ENCODE measurements at regions of chr1 and their contacts with region 1.

Region 1: DNA sequence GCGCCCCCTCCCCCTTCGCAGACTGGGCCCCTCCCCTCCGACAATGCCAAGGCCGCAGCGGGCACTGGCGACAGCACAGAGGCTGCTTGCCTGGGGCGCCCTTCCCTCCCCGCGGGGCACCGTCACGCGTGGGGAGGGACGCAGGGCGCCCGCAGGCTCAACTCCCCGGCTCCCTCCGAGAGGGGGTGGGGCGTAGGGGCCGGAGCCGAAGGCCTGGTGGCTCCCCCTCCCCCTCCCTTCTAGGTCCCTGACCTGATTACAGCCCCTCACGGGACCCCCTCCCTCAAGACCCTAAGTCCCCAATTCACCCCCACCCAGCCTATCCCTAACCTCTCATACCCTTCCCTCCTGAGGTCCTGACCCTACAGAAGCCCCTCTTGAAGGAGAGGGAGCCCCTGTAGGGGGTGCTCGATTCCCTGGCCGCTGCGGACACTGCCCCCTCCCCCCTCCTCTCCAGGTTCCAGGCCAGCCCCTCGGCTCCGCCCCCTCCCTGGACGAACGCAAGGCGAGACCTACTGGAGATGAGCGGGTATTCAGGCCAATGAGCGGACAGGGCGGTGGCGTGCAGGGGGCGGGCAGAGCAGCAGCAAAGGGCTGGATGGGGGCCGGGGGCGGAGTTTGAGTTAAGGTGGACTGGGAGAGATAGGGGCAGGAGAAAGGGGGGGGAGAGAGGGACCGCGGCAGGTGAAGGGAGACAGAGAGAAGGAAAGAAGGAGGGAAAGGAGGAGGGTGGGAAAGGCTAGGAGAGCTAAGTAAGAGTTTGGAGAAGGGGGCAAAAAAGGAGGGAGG is 733 bp upstream of the ZBTB7B start:
- DNase-seq: peak; percentile 100
- H3K4me3 ChIP-seq: peak overlapping the region; percentile 92
- H3K4me3 Mint-ChIP-seq: peak overlapping the region; percentile 96
- H3K27ac Mint-ChIP-seq: peak overlapping the region; percentile 96
- H3K4me1 ChIP-seq: peaks cover 25% of the 10 kb centered on the region
- H3K4me1 Mint-ChIP-seq: peaks cover 30% of the 10 kb centered on the region
- H3K27me3 ChIP-seq: no peaks in the 10 kb centered on the region
- H3K27me3 Mint-ChIP-seq: no peaks in the 10 kb centered on the region
- CTCF ChIP-seq: peak; percentile 27 to 75

Region 2: DNA sequence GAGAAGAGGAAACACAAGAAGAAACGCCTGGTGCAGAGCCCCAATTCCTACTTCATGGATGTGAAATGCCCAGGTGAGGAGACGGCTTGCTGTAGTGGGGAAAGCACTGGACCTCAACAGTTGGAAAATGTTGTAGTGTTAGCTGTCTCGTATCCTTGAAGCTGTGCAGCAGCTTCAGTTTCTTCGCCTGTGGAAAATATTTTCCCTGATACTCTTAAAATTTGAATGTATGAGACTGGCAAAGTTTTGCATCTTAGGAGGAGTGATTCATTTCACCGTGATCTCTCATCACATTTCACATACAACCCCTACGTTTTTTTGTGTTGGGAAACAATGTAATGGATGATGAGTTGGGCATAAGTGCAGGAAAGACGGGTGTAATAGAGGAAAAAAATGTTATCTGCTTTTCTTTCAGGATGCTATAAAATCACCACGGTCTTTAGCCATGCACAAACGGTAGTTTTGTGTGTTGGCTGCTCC is 1010.7 kb before region 1 on chr1:
- CTCF ChIA-PET with region 1: no interaction called
- POLR2A ChIA-PET with region 1: no interaction called
- intact Hi-C with region 1: no loop called
- DNase-seq: no peak
- H3K4me3 ChIP-seq: peak overlapping the region; percentile 83
- H3K4me3 Mint-ChIP-seq: peak overlapping the region; percentile 95
- H3K27ac Mint-ChIP-seq: peak overlapping the region; percentile 99
- H3K4me1 ChIP-seq: peaks cover 9% of the 10 kb centered on the region; the same call in 1 of the 2 replicates
- H3K4me1 Mint-ChIP-seq: peaks cover 31% of the 10 kb centered on the region
- H3K27me3 ChIP-seq: no peaks in the 10 kb centered on the region
- H3K27me3 Mint-ChIP-seq: peaks cover 3% of the 10 kb centered on the region
- CTCF ChIP-seq: no peak

Region 3: DNA sequence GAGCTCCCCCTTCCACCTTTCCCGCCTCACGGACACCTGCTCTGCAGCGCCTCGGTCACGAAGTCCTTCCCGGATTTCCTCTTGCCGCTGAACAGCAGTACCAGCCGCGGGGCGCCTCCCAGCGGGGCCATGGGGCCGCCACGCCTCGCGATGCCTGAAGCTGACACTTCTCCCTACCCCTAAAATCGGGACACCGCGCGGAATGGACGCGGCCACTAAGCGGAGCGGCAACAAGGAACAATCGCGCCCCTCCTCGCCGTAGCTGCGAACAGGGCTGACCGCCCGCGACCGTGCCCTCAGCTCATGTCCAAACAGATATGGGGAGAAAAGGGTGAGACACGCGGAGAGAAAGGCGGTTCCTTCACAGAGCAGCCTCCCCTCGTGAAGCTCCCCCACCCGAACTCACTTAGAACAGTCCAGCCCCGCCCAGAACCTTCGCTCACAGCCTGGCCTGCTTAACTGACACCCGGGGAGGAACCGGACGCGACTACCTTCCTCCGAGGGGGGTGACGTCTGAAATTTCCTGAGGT is 65.2 kb before region 1 on chr1 and contains the start of gene PMVK:
- CTCF ChIA-PET with region 1: interaction called, 11 read pairs
- POLR2A ChIA-PET with region 1: interaction called, 3 read pairs
- intact Hi-C with region 1: no loop called
- DNase-seq: peak; percentile 97 to 98
- H3K4me3 ChIP-seq: peak within 1 kb of the TSS; percentile 72
- H3K4me3 Mint-ChIP-seq: peak within 1 kb of the TSS; percentile 87
- H3K27ac Mint-ChIP-seq: peak within 1 kb of the TSS; percentile 99
- H3K4me1 ChIP-seq: peaks cover 6% of the 10 kb centered on the region
- H3K4me1 Mint-ChIP-seq: peaks cover 17% of the 10 kb centered on the region
- H3K27me3 ChIP-seq: no peaks in the 10 kb centered on the region
- H3K27me3 Mint-ChIP-seq: no peaks in the 10 kb centered on the region
- CTCF ChIP-seq: peak in 1 of 2 experiments; percentile 62
- total RNA-seq, gene PMVK: 25.1 and 25.2 TPM in 2 replicates

Region 4: GRCh38 chr1:154974063-154974807 is 27.6 kb before region 1 on chr1 and contains the start of gene CKS1B:
- CTCF ChIA-PET with region 1: interaction called, 26 read pairs
- POLR2A ChIA-PET with region 1: interaction called, 75 read pairs
- intact Hi-C with region 1: loop called (anchors 1 kb)
- DNase-seq: peak; percentile 97 to 99
- H3K4me3 ChIP-seq: peak within 1 kb of the TSS; percentile 52
- H3K4me3 Mint-ChIP-seq: no peak within 1 kb of the TSS
- H3K27ac Mint-ChIP-seq: no peak within 1 kb of the TSS
- H3K4me1 ChIP-seq: peaks cover 27% of the 10 kb centered on the region
- H3K4me1 Mint-ChIP-seq: peaks cover 25% of the 10 kb centered on the region
- H3K27me3 ChIP-seq: no peaks in the 10 kb centered on the region
- H3K27me3 Mint-ChIP-seq: no peaks in the 10 kb centered on the region
- CTCF ChIP-seq: no peak
- total RNA-seq, gene CKS1B: 243 and 259 TPM in 2 replicates

Region 5: GRCh38 chr1:155017041-155017945 is 15.4 kb after region 1 on chr1:
- CTCF ChIA-PET with region 1: interaction called, 43 read pairs
- POLR2A ChIA-PET with region 1: interaction called, 5 read pairs
- intact Hi-C with region 1: loop called (anchors 1 kb)
- DNase-seq: peak; percentile 97 to 98
- H3K4me3 ChIP-seq: peak overlapping the region; percentile 6; the same call in 1 of the 2 replicates
- H3K4me3 Mint-ChIP-seq: peak overlapping the region; percentile 56
- H3K27ac Mint-ChIP-seq: peak overlapping the region; percentile 76
- H3K4me1 ChIP-seq: peaks cover 20% of the 10 kb centered on the region
- H3K4me1 Mint-ChIP-seq: peaks cover 38% of the 10 kb centered on the region
- H3K27me3 ChIP-seq: no peaks in the 10 kb centered on the region
- H3K27me3 Mint-ChIP-seq: no peaks in the 10 kb centered on the region
- CTCF ChIP-seq: peak; percentile 99 to 100

Region 6: DNA sequence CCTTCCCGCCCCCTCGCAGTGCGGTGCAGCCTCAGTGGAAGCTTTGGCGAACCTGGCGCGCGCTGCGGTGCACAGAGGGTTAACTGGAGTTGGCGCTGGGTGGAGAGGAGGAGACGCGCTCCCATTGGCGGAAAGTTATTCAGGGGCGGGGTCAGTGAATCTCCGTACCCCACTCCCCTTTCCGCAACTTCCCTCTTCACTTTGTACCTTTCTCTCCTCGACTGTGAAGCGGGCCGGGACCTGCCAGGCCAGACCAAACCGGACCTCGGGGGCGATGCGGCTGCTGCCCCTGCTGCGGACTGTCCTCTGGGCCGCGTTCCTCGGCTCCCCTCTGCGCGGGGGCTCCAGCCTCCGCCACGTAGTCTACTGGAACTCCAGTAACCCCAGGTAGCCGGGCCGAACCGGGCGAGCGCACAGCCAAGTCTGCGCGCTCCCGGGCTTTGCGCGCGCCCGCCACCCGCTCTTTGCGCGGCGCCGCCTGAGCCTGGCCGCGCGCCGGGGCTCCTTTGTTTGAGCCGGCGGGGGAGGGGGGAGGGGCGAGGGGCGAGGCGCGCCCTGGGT is 61.8 kb after region 1 on chr1 and contains the start of gene EFNA4:
- CTCF ChIA-PET with region 1: interaction called, 5 read pairs
- POLR2A ChIA-PET with region 1: interaction called, 3 read pairs
- intact Hi-C with region 1: loop called (anchors 1 kb)
- DNase-seq: peak; percentile 91
- H3K4me3 ChIP-seq: peak within 1 kb of the TSS; percentile 64
- H3K4me3 Mint-ChIP-seq: peak within 1 kb of the TSS; percentile 86
- H3K27ac Mint-ChIP-seq: peak within 1 kb of the TSS; percentile 22
- H3K4me1 ChIP-seq: 0 out of 2 replicates have a peak, but pooled peaks cover 19% of the 10 kb centered on the region
- H3K4me1 Mint-ChIP-seq: peaks cover 22% of the 10 kb centered on the region
- H3K27me3 ChIP-seq: no peaks in the 10 kb centered on the region
- H3K27me3 Mint-ChIP-seq: no peaks in the 10 kb centered on the region
- CTCF ChIP-seq: no peak
- total RNA-seq, gene EFNA4: 13.8 and 16.0 TPM in 2 replicates

Region 7: GRCh38 chr1:155127105-155127964 is 125.5 kb after region 1 on chr1 and contains the start of gene EFNA1:
- CTCF ChIA-PET with region 1: no interaction called
- POLR2A ChIA-PET with region 1: no interaction called
- intact Hi-C with region 1: loop called (anchors 5 kb)
- DNase-seq: peak; percentile 82
- H3K4me3 ChIP-seq: peak within 1 kb of the TSS; percentile 68
- H3K4me3 Mint-ChIP-seq: peak within 1 kb of the TSS; percentile 89
- H3K27ac Mint-ChIP-seq: peak within 1 kb of the TSS; percentile 80
- H3K4me1 ChIP-seq: peaks cover 53% of the 10 kb centered on the region
- H3K4me1 Mint-ChIP-seq: peaks cover 42% of the 10 kb centered on the region
- H3K27me3 ChIP-seq: no peaks in the 10 kb centered on the region
- H3K27me3 Mint-ChIP-seq: no peaks in the 10 kb centered on the region
- CTCF ChIP-seq: no peak
- total RNA-seq, gene EFNA1: 42.5 and 47.9 TPM in 2 replicates

Region 8: GRCh38 chr1:155360051-155360450 is 358.2 kb after region 1 on chr1:
- CTCF ChIA-PET with region 1: no interaction called
- POLR2A ChIA-PET with region 1: no interaction called
- intact Hi-C with region 1: no loop called
- DNase-seq: no peak
- H3K4me3 ChIP-seq: no peak overlapping the region
- H3K4me3 Mint-ChIP-seq: no peak overlapping the region
- H3K27ac Mint-ChIP-seq: no peak overlapping the region
- H3K4me1 ChIP-seq: no peaks in the 10 kb centered on the region
- H3K4me1 Mint-ChIP-seq: no peaks in the 10 kb centered on the region
- H3K27me3 ChIP-seq: no peaks in the 10 kb centered on the region
- H3K27me3 Mint-ChIP-seq: no peaks in the 10 kb centered on the region
- CTCF ChIP-seq: no peak

Region 9: GRCh38 chr1:155420788-155421187 is 418.9 kb after region 1 on chr1:
- CTCF ChIA-PET with region 1: no interaction called
- POLR2A ChIA-PET with region 1: no interaction called
- intact Hi-C with region 1: no loop called
- DNase-seq: no peak
- H3K4me3 ChIP-seq: no peak overlapping the region
- H3K4me3 Mint-ChIP-seq: no peak overlapping the region
- H3K27ac Mint-ChIP-seq: no peak overlapping the region
- H3K4me1 ChIP-seq: no peaks in the 10 kb centered on the region
- H3K4me1 Mint-ChIP-seq: no peaks in the 10 kb centered on the region
- H3K27me3 ChIP-seq: no peaks in the 10 kb centered on the region
- H3K27me3 Mint-ChIP-seq: no peaks in the 10 kb centered on the region
- CTCF ChIP-seq: no peak

Measured in Caco-2 (cell line).